Heart left ventricle (tissue), 16 donors: ENCODE measurements at regions of chr15 and their contacts with region 1.

Region 1: DNA sequence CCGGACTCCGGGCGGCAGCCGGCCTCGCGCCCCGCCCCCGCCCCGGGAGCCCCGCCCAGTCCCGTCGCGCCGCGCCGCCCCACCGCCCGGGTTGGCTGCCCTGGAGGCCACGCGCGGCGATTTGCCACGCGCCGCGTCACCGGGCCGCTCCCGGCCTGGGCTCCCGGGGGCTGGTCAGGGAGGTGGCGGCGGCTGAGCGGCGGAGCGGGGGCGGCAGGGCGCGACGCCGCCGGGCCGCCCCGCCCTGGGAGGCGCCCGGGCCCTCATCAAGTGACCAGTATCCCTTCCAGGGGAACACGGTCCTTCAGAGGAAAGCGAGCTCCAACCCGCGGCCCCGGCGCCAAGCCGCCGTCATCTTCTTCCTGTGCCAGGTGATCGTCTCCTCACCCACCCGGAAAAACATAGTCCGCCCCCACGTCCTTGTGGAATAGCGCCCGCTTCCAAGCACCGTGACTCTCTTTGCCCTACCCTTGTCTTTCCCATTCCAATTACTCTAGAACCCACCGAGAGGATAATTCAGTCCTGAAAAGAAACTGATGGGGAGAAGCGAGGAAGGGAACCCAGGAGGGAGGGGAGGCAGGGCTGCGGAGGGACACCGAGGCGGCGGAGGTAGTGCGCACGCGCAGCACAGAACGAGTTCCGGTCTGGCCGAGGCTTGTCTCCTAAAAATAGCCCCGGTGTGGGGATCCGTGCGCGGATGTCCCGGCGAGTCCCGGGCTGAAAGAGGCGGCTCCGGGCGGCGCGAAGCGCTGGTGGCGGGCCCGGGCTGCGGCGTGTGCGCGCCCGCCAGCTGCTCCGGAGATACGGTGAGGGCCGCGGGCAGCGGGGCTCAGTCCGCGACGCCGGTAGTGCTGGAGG is at the start of gene MEF2A:
- DNase-seq: peak; percentile 96 to 98 (median 97)
- ATAC-seq: peak; percentile 79 to 85 (median 84)
- H3K4me3 ChIP-seq: peak within 1 kb of the TSS; percentile 73 to 97 (median 86)
- H3K27ac ChIP-seq: peak within 1 kb of the TSS; percentile 97 to 100 (median 99)
- H3K4me1 ChIP-seq: peaks cover 6 to 57% (median 35%) of the 10 kb centered on the region in 12 donors
- H3K27me3 ChIP-seq: no peaks in the 10 kb centered on the region
- CTCF ChIP-seq: no peak
- POLR2A ChIP-seq: peak in 1 of 2 donors; percentile 67
- total RNA-seq, gene MEF2A: 131 to 192 (median 160) TPM

Region 2: DNA sequence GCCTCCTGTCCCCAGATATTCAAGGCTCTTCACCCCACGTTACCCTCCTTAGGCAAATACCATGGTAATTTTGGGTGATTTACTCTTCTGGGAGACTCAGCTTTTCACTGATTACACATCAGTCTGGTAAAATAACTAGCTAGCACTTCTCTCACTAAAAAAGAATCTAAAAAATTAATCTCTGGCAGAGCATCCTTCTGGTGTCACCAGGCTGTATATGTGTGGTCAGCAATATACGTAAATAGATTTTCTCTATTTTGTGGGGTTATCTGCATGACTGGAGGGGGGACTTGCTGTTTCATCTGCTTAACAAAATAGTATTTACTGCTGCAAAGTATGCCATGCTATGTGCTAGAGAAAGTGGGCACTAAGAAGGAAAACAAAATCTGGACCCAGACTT is 269.1 kb before region 1 on chr15:
- intact Hi-C with region 1: loop called in 1 of 10 experiments (anchors 10 kb)
- DNase-seq: no peak
- ATAC-seq: no peak
- H3K4me3 ChIP-seq: no peak overlapping the region
- H3K27ac ChIP-seq: no peak overlapping the region
- H3K4me1 ChIP-seq: no peaks in the 10 kb centered on the region
- H3K27me3 ChIP-seq: no peaks in the 10 kb centered on the region
- CTCF ChIP-seq: no peak
- POLR2A ChIP-seq: no peak

Region 3: DNA sequence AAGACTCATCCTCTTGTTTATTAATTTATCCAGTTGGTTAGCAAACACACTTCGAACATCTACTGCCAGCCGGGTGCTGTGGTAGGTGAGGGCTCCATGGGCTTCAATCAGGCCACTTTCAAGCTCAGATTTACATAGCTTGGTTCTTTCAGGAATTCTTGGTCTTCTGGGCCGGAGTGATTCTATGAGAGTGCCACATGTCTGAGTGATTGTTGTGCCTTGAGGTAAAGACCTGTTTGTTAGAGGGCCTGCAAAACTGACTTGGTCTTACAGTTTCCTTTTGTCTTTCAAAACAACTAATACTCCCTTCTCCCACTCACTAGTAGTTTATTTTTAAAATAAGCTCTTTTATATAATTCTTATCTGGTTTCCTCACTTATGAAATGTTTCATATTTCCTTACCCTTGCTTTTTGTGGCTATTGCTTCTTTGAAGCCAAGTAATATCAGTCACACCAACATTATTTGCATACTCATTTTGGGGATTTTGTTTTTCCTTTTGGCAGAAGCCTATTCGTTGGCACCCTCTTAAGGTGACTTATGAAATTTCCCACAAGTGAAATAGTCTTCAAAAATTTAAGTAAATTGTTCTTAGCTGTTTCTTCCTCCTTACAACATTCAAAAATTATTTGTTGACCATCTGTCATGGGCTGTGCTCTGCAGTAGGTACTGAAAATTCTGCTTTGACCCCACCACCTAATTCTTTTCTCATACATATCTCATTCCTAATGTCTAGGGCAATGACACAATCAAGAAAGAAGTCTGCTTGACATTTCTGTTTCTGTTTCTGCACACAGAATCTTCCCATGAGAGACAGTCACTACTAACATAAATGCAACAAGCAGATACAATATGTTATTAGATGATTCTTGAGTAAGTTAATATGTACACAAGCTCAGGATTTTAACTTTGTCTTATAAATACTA is 194.1 kb before region 1 on chr15:
- intact Hi-C with region 1: no loop called
- DNase-seq: no peak
- ATAC-seq: no peak
- H3K4me3 ChIP-seq: no peak overlapping the region
- H3K27ac ChIP-seq: peak overlapping the region in 1 of 12 donors; percentile 23
- H3K4me1 ChIP-seq: peaks cover 0 to 13% (median 4%) of the 10 kb centered on the region in 12 donors
- H3K27me3 ChIP-seq: no peaks in the 10 kb centered on the region
- CTCF ChIP-seq: peak in 3 of 12 donors; percentile 10 to 22 (median 14)
- POLR2A ChIP-seq: no peak

Region 4: GRCh38 chr15:99414755-99415731 is 150.5 kb before region 1 on chr15:
- intact Hi-C with region 1: loop called in 1 of 10 experiments (anchors 5 kb)
- DNase-seq: peak in 2 of 5 donors; percentile 19 to 65
- ATAC-seq: peak in 1 of 4 donors; percentile 44
- H3K4me3 ChIP-seq: no peak overlapping the region
- H3K27ac ChIP-seq: no peak overlapping the region
- H3K4me1 ChIP-seq: peaks cover 0 to 10% (median 0%) of the 10 kb centered on the region in 12 donors
- H3K27me3 ChIP-seq: no peaks in the 10 kb centered on the region
- CTCF ChIP-seq: no peak
- POLR2A ChIP-seq: no peak

Region 5: GRCh38 chr15:99452774-99453636 is 112.5 kb before region 1 on chr15:
- intact Hi-C with region 1: loop called in 9 of 10 experiments (anchors 1 to 10 kb)
- DNase-seq: peak; percentile 91 to 96 (median 95)
- ATAC-seq: peak; percentile 23 to 66 (median 52)
- H3K4me3 ChIP-seq: peak overlapping the region in 7 of 12 donors; percentile 6 to 30 (median 16)
- H3K27ac ChIP-seq: peak overlapping the region; percentile 86 to 99 (median 94)
- H3K4me1 ChIP-seq: peaks cover 14 to 88% (median 69%) of the 10 kb centered on the region in 12 donors
- H3K27me3 ChIP-seq: no peaks in the 10 kb centered on the region
- CTCF ChIP-seq: no peak
- POLR2A ChIP-seq: no peak

Region 6: GRCh38 chr15:99522288-99522687 is 43.2 kb before region 1 on chr15:
- intact Hi-C with region 1: no loop called
- DNase-seq: no peak
- ATAC-seq: no peak
- H3K4me3 ChIP-seq: no peak overlapping the region
- H3K27ac ChIP-seq: no peak overlapping the region
- H3K4me1 ChIP-seq: no peaks in the 10 kb centered on the region
- H3K27me3 ChIP-seq: no peaks in the 10 kb centered on the region
- CTCF ChIP-seq: no peak
- POLR2A ChIP-seq: no peak

Region 7: GRCh38 chr15:99536422-99537040 is 29.0 kb before region 1 on chr15:
- intact Hi-C with region 1: loop called in 1 of 10 experiments (anchors 2 kb)
- DNase-seq: peak in 4 of 5 donors; percentile 37 to 76 (median 54)
- ATAC-seq: peak; percentile 82 to 94 (median 92)
- H3K4me3 ChIP-seq: no peak overlapping the region
- H3K27ac ChIP-seq: peak overlapping the region in 11 of 12 donors; percentile 47 to 79 (median 66)
- H3K4me1 ChIP-seq: peaks cover 0 to 20% (median 12%) of the 10 kb centered on the region in 12 donors
- H3K27me3 ChIP-seq: no peaks in the 10 kb centered on the region
- CTCF ChIP-seq: no peak
- POLR2A ChIP-seq: no peak

Region 8: GRCh38 chr15:99550077-99550476 is 15.5 kb before region 1 on chr15:
- intact Hi-C with region 1: no loop called
- DNase-seq: no peak
- ATAC-seq: no peak
- H3K4me3 ChIP-seq: no peak overlapping the region
- H3K27ac ChIP-seq: no peak overlapping the region
- H3K4me1 ChIP-seq: no peaks in the 10 kb centered on the region
- H3K27me3 ChIP-seq: no peaks in the 10 kb centered on the region
- CTCF ChIP-seq: no peak
- POLR2A ChIP-seq: no peak